ENCODE measurements at regions of chr14 and their contacts with region 1.

Region 1: GRCh38 chr14:29376237-29376636 is 551.4 kb downstream of the PRKD1 start:
- DNase-seq: no peak
- ATAC-seq: no peak
- H3K4me3 ChIP-seq: no peak overlapping the region
- H3K27ac ChIP-seq: no peak overlapping the region
- H3K4me1 ChIP-seq: no peaks in the 10 kb centered on the region
- H3K27me3 ChIP-seq: no peaks in the 10 kb centered on the region
- CTCF ChIP-seq: no peak

Region 2: DNA sequence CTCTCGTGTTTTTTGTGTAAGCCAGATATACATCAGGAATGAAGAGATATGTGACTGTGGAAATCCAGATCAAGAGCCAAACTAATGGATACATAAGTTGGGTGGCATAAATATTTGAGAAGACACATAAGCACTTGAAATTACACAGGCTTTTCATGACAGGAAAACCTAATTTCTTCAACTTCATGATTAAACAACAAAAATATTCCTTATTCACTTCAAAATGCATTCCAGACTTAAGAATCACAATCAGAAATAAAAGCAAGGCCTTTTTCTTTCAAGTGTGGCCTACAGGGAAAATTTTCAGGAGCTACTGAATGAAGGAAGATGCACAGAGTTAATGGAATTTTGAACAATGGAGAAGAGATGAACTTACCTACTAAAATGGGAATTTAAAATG is 94.1 kb before region 1 on chr14:
- intact Hi-C with region 1: loop called (anchors 5 kb)
- DNase-seq: no peak
- ATAC-seq: no peak
- H3K4me3 ChIP-seq: no peak overlapping the region
- H3K27ac ChIP-seq: no peak overlapping the region
- H3K4me1 ChIP-seq: no peaks in the 10 kb centered on the region
- H3K27me3 ChIP-seq: no peaks in the 10 kb centered on the region
- CTCF ChIP-seq: no peak

Region 3: GRCh38 chr14:29671034-29671433 is 294.8 kb after region 1 on chr14:
- intact Hi-C with region 1: no loop called
- DNase-seq: no peak
- ATAC-seq: no peak
- H3K4me3 ChIP-seq: no peak overlapping the region
- H3K27ac ChIP-seq: no peak overlapping the region
- H3K4me1 ChIP-seq: no peaks in the 10 kb centered on the region
- H3K27me3 ChIP-seq: no peaks in the 10 kb centered on the region
- CTCF ChIP-seq: no peak